BJ (cell line): ENCODE measurements at regions of chr6 and their contacts with region 1.

Region 1: DNA sequence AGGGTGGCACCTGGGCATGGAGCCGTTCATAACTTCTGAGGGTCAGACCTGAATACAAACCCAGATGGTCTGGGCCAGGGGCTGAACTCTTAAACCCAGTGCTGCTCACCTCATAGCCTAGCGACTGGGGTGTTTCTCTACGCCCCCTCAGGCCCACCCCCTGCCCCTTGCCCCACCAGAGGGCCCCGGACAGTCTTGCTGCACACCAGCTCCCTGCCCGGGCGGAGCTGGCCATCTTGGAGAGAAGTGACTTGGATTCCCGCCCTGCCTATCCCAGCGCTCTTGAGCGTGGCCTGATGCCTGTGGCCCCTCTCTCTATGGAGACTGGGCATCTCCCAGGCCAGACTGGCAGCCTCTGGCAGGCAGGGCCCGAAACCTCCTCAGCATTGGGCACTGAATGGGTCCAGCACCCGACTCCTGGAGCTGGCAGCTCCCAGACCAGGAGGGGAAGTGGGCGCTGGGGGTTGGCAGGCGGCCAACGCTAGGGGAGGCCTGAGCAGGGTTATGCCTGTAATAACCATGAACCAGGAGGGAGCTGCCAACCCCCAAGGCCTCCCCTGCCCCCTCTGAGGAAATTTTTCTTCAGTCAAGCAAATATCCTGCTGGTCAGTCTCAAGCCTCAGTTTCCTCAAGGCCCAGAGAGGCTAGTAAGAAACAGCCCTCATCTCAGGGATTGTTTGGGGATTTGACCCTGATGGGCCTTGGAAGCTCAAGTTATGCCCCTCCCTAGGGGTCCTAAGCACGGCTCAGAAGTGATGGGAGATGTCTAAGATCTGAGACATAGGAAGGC is 169.5 kb downstream of the VEGFA start:
- DNase-seq: no peak
- H3K4me3 ChIP-seq: no peak overlapping the region
- H3K27me3 ChIP-seq: no peaks in the 10 kb centered on the region; the same call in 1 of the 2 replicates
- CTCF ChIP-seq: no peak

Region 2: GRCh38 chr6:43926634-43927524 is 12.6 kb before region 1 on chr6:
- CTCF ChIA-PET with region 1: interaction called, 12 read pairs
- POLR2A ChIA-PET with region 1: interaction called, 3 read pairs
- DNase-seq: peak; percentile 82
- H3K4me3 ChIP-seq: no peak overlapping the region
- H3K27me3 ChIP-seq: no peaks in the 10 kb centered on the region
- CTCF ChIP-seq: no peak

Region 3: GRCh38 chr6:43951063-43951755 is 11.7 kb after region 1 on chr6:
- CTCF ChIA-PET with region 1: interaction called, 10 read pairs
- POLR2A ChIA-PET with region 1: no interaction called
- DNase-seq: no peak
- H3K4me3 ChIP-seq: no peak overlapping the region
- H3K27me3 ChIP-seq: no peaks in the 10 kb centered on the region; the same call in 1 of the 2 replicates
- CTCF ChIP-seq: peak; percentile 64